ENCODE measurements at regions of chr14 and their contacts with region 1.

Region 1: DNA sequence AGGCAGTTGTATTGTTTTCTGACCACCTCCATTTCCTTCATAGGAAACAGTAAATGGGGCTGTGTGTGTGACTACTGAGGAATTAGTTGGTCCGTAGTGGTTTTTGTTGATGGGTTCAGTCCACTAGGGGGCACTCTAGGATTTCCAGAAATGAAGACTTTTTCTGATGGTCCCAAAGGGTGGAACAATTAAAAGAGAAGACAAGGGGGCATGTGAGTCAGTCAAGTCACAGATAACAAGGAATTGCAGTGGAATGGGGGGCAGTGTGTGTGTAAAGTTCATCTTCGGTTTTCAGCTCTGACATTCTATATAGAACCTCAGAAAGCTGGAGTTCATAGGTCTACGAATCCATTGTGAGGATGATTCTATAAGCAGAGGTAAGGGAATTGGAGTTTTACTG is 186.6 kb upstream of the OR4E1 start:
- DNase-seq: peak; percentile 51
- H3K4me3 Mint-ChIP-seq: peak overlapping the region; percentile 51
- H3K27ac Mint-ChIP-seq: peak overlapping the region; percentile 24
- H3K4me1 Mint-ChIP-seq: peaks cover 9% of the 10 kb centered on the region
- H3K27me3 Mint-ChIP-seq: peaks cover 14% of the 10 kb centered on the region

Region 2: GRCh38 chr14:21846227-21846885 is 13.8 kb before region 1 on chr14:
- CTCF ChIA-PET with region 1: interaction called, 21 read pairs
- POLR2A ChIA-PET with region 1: interaction called, 65 read pairs
- DNase-seq: peak; percentile 76
- H3K4me3 Mint-ChIP-seq: peak overlapping the region; percentile 78
- H3K27ac Mint-ChIP-seq: peak overlapping the region; percentile 82
- H3K4me1 Mint-ChIP-seq: peaks cover 10% of the 10 kb centered on the region
- H3K27me3 Mint-ChIP-seq: peaks cover 31% of the 10 kb centered on the region

Region 3: DNA sequence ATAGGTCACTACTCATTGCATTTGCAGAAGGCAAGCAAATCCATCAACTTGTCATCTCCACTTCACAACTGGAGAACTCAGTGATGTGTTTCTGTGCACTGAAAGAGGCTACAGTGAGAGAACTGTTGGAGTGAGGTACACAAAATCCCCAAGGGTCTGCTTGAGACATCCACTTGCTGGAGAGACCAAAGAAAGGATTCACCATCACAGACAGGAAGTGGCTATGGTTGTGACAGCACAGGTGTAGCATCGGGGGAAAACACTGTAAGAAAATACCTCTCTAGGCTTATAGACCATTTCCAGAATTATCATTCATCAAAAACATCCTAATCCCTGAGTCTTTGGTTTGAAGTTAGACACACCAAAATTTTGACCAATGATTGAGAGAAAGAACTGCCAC is 14.8 kb after region 1 on chr14:
- CTCF ChIA-PET with region 1: no interaction called
- POLR2A ChIA-PET with region 1: no interaction called
- DNase-seq: no peak
- H3K4me3 Mint-ChIP-seq: peak overlapping the region; percentile 35
- H3K27ac Mint-ChIP-seq: peak overlapping the region; percentile 76
- H3K4me1 Mint-ChIP-seq: peaks cover 27% of the 10 kb centered on the region
- H3K27me3 Mint-ChIP-seq: peaks cover 2% of the 10 kb centered on the region

Region 4: DNA sequence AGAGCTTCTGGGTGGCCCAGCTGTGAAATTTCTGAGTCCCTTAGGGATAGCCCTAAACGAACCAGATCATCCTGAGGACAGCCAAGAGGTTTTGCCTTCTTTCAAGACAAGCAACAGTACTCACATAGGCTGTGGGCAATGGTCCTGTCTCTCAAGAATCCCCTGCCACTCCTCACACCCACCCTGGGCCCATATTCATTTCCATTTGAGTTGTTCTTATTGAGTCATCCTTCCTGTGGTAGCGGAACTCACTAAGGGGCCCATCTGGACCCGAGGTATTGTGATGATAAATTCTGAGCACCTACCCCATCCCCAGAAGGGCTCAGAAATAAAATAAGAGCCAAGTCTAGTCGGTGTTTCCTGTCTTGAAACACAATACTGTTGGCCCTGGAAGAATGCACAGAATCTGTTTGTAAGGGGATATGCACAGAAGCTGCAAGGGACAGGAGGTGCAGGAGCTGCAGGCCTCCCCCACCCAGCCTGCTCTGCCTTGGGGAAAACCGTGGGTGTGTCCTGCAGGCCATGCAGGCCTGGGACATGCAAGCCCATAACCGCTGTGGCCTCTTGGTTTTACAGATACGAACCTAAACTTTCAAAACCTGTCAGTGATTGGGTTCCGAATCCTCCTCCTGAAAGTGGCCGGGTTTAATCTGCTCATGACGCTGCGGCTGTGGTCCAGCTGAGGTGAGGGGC is 690.0 kb after region 1 on chr14:
- CTCF ChIA-PET with region 1: no interaction called
- POLR2A ChIA-PET with region 1: interaction called, 21 read pairs
- DNase-seq: peak; percentile 79
- H3K4me3 Mint-ChIP-seq: peak overlapping the region; percentile 69
- H3K27ac Mint-ChIP-seq: peak overlapping the region; percentile 97
- H3K4me1 Mint-ChIP-seq: peaks cover 93% of the 10 kb centered on the region
- H3K27me3 Mint-ChIP-seq: no peaks in the 10 kb centered on the region